AG04450 (cell line): ENCODE measurements at regions of chr5 and their contacts with region 1.

Region 1: DNA sequence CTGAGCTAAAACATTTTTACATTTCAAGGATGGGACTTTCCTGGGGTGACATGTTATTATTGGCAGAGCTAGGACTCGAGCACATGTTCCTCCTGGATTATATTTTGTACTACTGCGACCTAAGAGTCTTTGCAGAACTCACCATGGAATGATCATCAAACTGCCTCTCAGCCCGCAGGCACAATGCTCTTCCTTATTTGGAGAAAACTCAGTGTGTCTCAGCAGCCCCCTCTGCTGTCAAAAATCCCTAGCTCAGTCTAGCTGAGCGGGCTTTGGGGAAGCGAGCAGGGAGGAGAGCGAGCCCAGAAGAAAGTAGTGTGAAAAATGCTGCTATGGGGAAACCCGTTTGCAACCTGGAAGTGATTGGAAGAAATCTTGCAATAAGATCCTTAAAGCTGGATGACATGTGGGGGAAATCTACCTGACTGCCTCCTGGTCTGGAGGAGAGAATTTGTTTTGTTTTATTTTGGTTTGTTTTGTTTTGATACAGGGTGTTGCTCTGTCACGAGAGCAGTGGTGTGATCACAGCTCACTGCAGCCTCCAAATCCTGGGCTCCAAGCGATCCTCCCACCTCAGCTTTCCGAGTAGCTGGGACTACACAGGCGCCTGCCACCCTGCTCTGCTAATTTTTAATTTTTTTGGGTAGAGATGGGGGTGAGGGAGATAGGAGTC is 89.9 kb upstream of the CLINT1 start:
- DNase-seq: peak; percentile 85
- H3K4me3 ChIP-seq: no peak overlapping the region
- H3K27ac ChIP-seq: no peak overlapping the region
- H3K27me3 ChIP-seq: no peaks in the 10 kb centered on the region
- CTCF ChIP-seq: peak; percentile 94

Region 2: DNA sequence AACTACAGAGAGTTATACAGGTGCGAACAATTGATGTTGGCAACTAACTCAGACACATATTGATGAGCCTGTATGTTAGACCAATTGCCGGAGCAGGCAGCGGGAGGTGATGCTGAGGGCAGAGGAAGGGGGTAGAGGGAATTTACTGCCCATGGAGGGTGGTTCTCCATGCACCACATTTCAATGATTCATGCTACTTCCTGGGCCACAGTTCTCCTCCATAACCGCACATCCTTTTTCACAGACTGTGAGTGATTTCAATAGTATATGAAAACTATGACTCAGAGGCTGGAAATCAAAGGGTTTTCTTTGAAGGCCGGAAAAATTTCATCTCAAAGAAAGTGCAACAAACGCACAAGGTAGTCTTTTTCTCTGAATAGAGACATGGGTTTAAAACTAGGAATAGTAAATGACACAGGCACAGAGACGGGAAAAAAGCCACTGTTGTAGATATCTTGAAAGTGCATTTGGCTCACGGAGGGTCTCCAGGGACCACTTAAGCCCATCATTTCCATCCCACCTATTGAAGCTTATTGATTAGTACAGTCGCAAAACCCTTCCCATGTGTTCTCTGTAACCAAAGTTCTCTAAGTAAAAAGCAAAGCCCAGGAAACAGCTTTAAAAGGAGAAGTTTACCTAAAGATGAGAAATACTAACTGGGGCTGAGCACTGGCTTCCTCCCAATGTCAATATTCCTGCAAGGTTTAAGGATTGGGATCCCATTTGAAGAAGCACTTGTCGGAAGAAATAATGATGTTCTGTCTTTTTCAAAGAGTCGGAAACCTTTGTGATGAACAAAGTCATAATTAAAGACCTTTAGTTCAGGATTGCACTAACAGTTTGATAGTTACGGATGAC is 345.3 kb before region 1 on chr5:
- CTCF ChIA-PET with region 1: no interaction called
- POLR2A ChIA-PET with region 1: no interaction called
- DNase-seq: peak; percentile 48
- H3K4me3 ChIP-seq: no peak overlapping the region
- H3K27ac ChIP-seq: no peak overlapping the region
- H3K27me3 ChIP-seq: no peaks in the 10 kb centered on the region
- CTCF ChIP-seq: no peak

Region 3: GRCh38 chr5:157743163-157744050 is 205.5 kb before region 1 on chr5 and contains the start of gene LSM11:
- CTCF ChIA-PET with region 1: interaction called, 10 read pairs
- POLR2A ChIA-PET with region 1: no interaction called
- DNase-seq: no peak
- H3K4me3 ChIP-seq: peak within 1 kb of the TSS; percentile 76
- H3K27ac ChIP-seq: no peak within 1 kb of the TSS
- H3K27me3 ChIP-seq: no peaks in the 10 kb centered on the region
- CTCF ChIP-seq: peak; percentile 98
- polyA plus RNA-seq, gene LSM11: 1.8 and 2.5 TPM in 2 replicates

Region 4: GRCh38 chr5:157793301-157793700 is 155.6 kb before region 1 on chr5:
- CTCF ChIA-PET with region 1: interaction called, 12 read pairs
- POLR2A ChIA-PET with region 1: no interaction called
- DNase-seq: no peak
- H3K4me3 ChIP-seq: no peak overlapping the region
- H3K27ac ChIP-seq: no peak overlapping the region
- H3K27me3 ChIP-seq: no peaks in the 10 kb centered on the region
- CTCF ChIP-seq: no peak

Region 5: DNA sequence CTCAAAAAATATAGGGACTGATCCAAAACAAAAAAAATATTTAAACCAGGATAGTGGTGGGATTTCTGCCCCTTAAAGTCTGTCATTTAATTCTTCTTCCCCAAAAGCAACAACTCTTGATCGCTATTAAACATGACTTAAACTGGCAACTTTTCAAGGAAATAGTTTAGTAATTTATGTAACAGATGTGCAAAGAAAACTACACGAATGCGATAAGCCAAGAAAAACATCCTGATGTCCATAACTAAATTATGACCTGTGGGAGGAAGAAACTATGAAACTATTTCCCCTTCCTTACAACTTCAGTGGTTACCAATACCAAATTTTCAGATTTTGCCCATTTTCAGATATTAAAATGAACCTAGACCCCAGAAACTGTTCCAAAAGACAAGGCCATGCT is 121.5 kb before region 1 on chr5:
- CTCF ChIA-PET with region 1: interaction called, 28 read pairs
- POLR2A ChIA-PET with region 1: no interaction called
- DNase-seq: no peak
- H3K4me3 ChIP-seq: no peak overlapping the region
- H3K27ac ChIP-seq: no peak overlapping the region
- H3K27me3 ChIP-seq: no peaks in the 10 kb centered on the region
- CTCF ChIP-seq: no peak

Region 6: DNA sequence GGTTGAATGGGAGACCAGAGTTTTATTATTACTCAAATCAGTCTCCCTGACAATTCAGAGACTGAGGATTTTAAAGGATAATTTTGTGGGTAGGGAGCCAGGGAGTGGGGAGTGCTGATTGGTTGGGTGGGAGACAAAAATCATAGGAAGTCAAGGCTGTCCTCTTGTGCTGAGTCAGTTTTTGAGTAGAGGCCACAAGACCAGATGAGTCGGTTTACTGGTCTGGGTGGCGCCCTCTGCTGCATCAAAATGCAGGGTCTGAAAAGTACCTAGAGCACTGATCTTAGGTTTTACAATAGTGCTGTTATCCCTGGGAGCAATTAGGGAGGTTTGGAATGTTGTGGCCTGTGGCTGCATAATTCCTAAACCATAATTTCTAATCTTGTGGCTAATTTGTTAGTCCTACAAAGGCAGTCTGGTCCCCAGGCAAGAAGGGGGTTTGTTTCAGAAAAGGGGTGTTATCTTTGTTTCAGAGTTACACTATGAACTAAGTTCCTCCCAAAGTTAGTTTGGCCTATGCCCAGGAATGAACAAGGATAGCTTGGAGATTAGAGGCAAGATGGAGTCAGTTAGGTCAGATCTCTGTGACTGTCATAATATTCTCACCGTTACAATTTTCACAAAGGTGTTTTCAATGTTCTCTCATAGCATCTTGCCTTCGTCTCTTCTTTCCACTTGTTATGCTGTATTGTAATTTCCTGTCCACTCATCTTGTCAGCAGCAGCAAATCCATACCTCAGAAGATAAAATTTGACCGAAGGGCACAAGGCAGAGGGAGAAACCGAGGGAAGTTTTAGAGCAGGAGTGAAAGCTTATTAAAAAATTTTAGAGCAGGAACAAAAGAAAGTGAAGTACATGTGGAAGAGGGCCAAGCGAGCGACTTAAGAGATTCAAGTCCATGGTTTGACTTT is 30.7 kb before region 1 on chr5:
- CTCF ChIA-PET with region 1: interaction called, 23 read pairs
- POLR2A ChIA-PET with region 1: no interaction called
- DNase-seq: peak; percentile 32
- H3K4me3 ChIP-seq: no peak overlapping the region
- H3K27ac ChIP-seq: no peak overlapping the region
- H3K27me3 ChIP-seq: no peaks in the 10 kb centered on the region
- CTCF ChIP-seq: peak; percentile 67

Region 7: DNA sequence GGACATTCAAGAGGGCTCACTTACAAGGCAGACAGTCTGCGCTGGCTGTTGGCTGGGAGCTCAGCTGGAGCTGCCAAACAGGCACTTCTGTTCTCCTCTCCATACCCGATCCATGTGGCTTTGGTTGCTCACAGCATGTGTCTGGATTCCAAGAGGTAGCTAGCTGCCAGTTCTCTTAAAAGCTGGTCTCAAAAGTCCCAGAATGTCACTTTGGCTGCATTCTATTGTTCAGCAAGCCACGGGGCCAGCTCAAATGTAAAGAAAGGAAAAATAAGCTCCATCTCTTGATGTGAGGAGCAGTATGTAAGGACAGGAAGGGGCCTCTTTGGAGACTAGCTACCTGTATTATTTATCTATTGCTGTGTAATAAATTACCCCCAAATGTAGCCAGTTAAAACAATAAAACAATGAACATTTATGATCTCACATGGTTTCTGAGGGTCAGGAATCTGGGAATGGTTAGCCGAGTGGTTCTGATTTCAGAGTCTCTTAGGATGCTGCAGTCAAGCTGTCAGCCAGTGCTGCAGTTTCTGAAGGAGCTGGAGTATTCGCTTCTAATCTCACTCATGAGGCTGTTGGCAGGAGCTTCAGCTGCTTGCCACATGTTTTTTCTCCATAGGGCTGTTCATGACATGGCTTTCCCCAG is 22.8 kb after region 1 on chr5:
- CTCF ChIA-PET with region 1: interaction called, 14 read pairs
- POLR2A ChIA-PET with region 1: no interaction called
- DNase-seq: no peak
- H3K4me3 ChIP-seq: no peak overlapping the region
- H3K27ac ChIP-seq: no peak overlapping the region
- H3K27me3 ChIP-seq: no peaks in the 10 kb centered on the region
- CTCF ChIP-seq: no peak

Region 8: DNA sequence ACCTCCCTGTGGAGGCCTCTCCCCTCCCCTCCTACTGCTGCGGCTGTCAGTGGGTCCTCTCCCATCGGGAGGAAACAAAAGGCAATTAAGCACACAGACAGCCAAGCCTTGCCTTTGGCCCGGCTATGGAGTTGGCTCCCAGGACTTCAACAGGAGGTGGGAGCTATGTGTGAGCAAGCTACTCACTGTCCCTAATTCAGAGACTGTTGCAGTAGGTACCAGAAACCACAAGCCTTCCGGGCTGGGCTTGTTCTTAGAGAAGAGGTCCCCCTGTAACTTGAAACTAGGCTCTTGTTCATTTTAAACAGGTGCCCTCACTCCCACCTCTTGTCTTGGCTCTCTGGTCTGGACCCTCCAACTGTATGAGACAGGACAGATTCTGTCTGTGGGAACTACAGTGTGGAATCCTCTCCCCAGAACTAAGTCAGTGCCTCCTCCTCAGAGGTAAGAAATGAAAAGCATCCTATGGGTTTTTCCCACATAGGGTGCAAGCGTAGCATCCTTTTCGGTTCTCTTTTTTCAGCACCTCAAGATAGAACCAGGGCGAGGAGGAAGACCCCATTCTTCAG is 589.7 kb after region 1 on chr5:
- CTCF ChIA-PET with region 1: no interaction called
- POLR2A ChIA-PET with region 1: no interaction called
- DNase-seq: no peak
- H3K4me3 ChIP-seq: no peak overlapping the region
- H3K27ac ChIP-seq: no peak overlapping the region
- H3K27me3 ChIP-seq: no peaks in the 10 kb centered on the region
- CTCF ChIP-seq: no peak

Region 9: DNA sequence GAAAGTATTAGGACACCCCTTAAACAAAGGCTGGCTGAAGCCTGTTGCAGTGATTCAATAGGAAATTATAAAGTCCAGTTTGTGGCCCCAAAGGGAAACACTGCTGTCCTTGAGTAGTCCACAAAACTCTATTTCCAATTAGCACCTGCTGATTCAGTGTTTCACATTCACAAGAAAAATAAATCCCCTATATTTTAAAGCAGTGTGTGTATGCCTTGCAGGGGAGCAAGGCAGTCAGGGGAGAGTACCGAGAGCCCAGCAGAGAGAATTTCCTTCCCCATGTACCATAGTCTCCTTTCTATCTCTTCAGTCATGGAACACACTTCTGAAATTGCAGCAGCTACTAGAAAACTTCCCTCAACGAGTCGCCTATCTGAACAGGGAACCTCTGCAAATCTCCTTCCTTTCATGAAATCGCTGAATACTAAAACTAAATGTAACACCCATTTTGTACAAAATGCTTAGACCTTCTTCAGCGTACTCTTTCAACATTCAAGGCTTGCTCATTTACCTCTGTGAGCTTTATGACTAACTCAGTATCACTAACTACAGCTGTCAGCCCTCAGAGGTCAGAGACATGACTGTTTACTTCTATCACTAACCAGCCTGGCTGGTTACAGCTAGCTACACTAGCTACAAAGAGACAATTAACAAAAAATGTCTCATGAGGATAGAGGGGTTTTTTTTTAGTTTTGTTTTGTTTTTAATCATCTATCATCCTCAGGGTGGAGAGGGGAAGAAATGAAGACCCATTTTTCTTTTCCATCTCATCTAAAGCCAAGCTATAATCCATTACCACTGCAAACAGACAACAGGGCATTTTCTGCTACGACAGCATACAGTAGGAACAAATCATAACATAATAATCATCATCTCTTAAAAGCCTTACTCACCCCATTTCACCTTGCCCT is 962.2 kb after region 1 on chr5:
- CTCF ChIA-PET with region 1: no interaction called
- POLR2A ChIA-PET with region 1: no interaction called
- DNase-seq: no peak
- H3K4me3 ChIP-seq: no peak overlapping the region
- H3K27ac ChIP-seq: no peak overlapping the region
- H3K27me3 ChIP-seq: no peaks in the 10 kb centered on the region
- CTCF ChIP-seq: no peak